Activated CD4-positive, alpha-beta T cell treated with anti-CD3 and anti-CD28 coated beads for 36 hours (primary cell): ENCODE measurements at regions of chr1 and their contacts with region 1.

Region 1: GRCh38 chr1:23367791-23368561 is 1.7 kb downstream of the ZNF436 start:
- DNase-seq: peak; percentile 99
- ATAC-seq: peak; percentile 95
- H3K4me3 Mint-ChIP-seq: peak overlapping the region; percentile 93
- H3K27ac Mint-ChIP-seq: peak overlapping the region; percentile 98
- H3K4me1 Mint-ChIP-seq: peaks cover 27% of the 10 kb centered on the region
- H3K27me3 Mint-ChIP-seq: no peaks in the 10 kb centered on the region

Region 2: DNA sequence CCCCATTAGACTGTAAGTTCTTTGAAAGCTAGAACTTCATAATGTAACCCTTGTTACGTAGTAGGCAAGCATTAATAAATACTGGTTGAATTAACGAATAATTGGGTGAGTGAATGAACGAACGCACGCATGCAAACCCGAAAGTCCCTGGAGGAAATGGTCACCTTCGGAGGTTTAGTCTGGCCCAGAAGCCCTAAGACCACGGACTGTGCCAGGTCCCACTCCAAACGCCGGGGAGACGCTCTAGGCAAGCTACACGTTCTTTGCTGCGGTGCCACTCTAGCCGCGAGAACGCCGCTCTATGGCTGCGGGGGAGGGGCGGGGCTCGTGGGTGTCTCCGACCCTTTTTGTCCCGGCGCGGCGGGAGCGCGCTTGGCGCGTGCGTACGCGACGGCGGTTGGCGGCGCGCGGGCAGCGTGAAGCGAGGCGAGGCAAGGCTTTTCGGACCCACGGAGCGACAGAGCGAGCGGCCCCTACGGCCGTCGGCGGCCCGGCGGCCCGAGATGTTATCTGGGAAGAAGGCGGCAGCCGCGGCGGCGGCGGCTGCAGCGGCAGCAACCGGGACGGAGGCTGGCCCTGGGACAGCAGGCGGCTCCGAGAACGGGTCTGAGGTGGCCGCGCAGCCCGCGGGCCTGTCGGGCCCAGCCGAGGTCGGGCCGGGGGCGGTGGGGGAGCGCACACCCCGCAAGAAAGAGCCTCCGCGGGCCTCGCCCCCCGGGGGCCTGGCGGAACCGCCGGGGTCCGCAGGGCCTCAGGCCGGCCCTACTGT is 348.7 kb before region 1 on chr1 and contains the start of gene KDM1A:
- CTCF ChIA-PET with region 1: no interaction called
- POLR2A ChIA-PET with region 1: no interaction called
- intact Hi-C with region 1: loop called in 1 of 2 experiments (anchors 1 kb)
- DNase-seq: peak; percentile 96
- ATAC-seq: peak; percentile 97
- H3K4me3 Mint-ChIP-seq: peak within 1 kb of the TSS; percentile 98
- H3K27ac Mint-ChIP-seq: peak within 1 kb of the TSS; percentile 90
- H3K4me1 Mint-ChIP-seq: peaks cover 43% of the 10 kb centered on the region
- H3K27me3 Mint-ChIP-seq: no peaks in the 10 kb centered on the region
- total RNA-seq, gene KDM1A: 66.5 to 73.2 TPM

Region 3: GRCh38 chr1:23384302-23385058 is 16.5 kb after region 1 on chr1:
- CTCF ChIA-PET with region 1: no interaction called
- POLR2A ChIA-PET with region 1: no interaction called
- intact Hi-C with region 1: no loop called
- DNase-seq: no peak
- ATAC-seq: no peak
- H3K4me3 Mint-ChIP-seq: no peak overlapping the region
- H3K27ac Mint-ChIP-seq: no peak overlapping the region
- H3K4me1 Mint-ChIP-seq: no peaks in the 10 kb centered on the region
- H3K27me3 Mint-ChIP-seq: no peaks in the 10 kb centered on the region

Region 4: DNA sequence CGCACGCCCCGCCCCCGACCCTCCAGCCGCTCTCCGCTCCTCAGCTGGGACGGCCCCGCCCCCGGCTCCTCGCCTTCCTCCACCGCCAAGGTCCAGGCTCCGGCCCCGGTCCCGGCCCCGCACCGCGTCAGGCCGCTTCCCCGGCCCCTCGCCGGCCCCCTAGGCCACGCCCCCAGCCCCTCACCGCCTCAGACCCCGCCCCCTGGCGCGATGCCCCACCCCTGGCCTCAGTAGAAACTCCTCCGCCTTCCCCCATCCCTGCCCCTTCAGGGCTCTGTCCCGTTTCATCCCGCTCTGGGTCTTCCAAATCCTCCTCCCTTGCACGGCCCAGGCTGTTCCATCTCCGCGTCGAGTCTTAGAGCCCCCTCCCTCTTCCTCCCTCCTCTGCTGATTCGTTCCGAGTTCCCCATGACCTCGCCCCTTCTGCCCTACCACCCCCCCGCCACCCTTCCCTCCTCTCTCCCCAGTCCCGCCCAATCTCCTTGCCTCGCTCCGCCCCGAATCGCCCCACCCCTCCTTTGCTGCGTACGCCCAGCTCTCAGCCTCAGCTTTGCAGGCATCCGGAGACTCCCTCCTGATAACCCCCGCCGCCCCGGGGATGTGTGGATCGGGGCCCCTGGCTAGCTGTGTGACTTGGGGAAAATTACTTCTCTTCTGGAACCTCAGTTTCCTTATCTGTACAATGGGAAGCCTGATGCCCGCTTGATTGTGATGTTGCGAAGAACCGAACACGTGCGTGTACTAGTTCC is 116.5 kb after region 1 on chr1:
- CTCF ChIA-PET with region 1: no interaction called
- POLR2A ChIA-PET with region 1: no interaction called
- intact Hi-C with region 1: loop called in 1 of 2 experiments (anchors 1 kb)
- DNase-seq: peak; percentile 95
- ATAC-seq: peak; percentile 94
- H3K4me3 Mint-ChIP-seq: peak overlapping the region; percentile 79
- H3K27ac Mint-ChIP-seq: peak overlapping the region; percentile 33
- H3K4me1 Mint-ChIP-seq: peaks cover 20% of the 10 kb centered on the region
- H3K27me3 Mint-ChIP-seq: peaks cover 18% of the 10 kb centered on the region

Region 5: GRCh38 chr1:23691499-23692307 is 323.7 kb after region 1 on chr1 and contains the start of gene RPL11:
- CTCF ChIA-PET with region 1: no interaction called
- POLR2A ChIA-PET with region 1: interaction called, 4 read pairs
- intact Hi-C with region 1: loop called (anchors 1 kb)
- DNase-seq: peak; percentile 93
- ATAC-seq: peak; percentile 98
- H3K4me3 Mint-ChIP-seq: peak within 1 kb of the TSS; percentile 97
- H3K27ac Mint-ChIP-seq: peak within 1 kb of the TSS; percentile 98
- H3K4me1 Mint-ChIP-seq: peaks cover 43% of the 10 kb centered on the region
- H3K27me3 Mint-ChIP-seq: peaks cover under 1% of the 10 kb centered on the region
- total RNA-seq, gene RPL11: 1,003 to 1,481 TPM

Region 6: DNA sequence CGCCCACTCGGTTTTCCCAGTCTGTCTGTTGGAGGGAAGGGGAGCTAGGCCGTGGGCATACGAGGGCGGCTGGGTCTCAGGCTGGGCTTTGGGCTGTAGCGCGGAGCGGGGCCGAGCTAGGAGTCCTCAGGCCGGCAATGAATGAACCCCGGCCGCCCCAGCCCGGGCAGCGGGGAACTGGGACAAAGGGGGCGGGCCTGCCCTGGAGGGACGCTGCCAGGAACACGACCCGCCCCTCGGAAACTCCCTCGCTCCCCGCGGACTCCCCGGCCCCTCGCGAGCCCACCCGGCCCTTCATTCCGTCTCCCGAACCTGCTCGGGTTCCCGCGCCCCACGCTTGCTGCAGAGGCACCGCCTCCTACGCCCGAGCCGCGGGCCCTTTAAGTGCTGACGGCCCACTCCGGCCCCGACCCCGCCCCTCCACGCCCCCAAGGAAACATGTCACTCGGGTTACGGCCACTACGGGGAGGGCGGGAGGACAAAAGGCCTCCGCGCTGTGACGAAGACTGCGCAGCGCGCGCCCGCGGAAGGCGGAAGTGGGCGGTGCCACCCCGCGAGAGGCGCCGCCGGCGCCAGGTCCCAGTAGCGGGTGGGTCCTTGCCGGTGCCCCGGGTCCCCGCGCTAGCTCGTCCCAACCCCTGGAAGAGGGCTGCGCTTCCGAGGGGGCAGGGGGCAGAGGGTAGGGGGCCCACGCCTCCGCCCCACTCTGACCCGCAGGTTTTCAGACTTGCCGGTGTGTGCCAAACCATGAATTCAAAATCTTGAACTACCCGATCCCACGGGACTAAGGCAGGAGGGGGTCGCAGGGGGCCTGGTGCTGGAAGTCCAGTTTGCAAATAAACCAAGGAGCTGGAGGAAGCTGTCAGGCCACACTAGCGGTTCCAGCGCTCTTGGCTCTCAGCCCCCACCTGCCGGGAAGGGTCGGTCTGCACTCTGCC is 432.7 kb after region 1 on chr1 and contains the start of gene GALE:
- CTCF ChIA-PET with region 1: interaction called, 3 read pairs
- POLR2A ChIA-PET with region 1: no interaction called
- intact Hi-C with region 1: loop called in 1 of 2 experiments (anchors 1 kb)
- DNase-seq: peak; percentile 99
- ATAC-seq: peak; percentile 84
- H3K4me3 Mint-ChIP-seq: peak within 1 kb of the TSS; percentile 86
- H3K27ac Mint-ChIP-seq: peak within 1 kb of the TSS; percentile 84
- H3K4me1 Mint-ChIP-seq: peaks cover 13% of the 10 kb centered on the region
- H3K27me3 Mint-ChIP-seq: no peaks in the 10 kb centered on the region
- total RNA-seq, gene GALE: 27.4 to 35.6 TPM

Region 7: DNA sequence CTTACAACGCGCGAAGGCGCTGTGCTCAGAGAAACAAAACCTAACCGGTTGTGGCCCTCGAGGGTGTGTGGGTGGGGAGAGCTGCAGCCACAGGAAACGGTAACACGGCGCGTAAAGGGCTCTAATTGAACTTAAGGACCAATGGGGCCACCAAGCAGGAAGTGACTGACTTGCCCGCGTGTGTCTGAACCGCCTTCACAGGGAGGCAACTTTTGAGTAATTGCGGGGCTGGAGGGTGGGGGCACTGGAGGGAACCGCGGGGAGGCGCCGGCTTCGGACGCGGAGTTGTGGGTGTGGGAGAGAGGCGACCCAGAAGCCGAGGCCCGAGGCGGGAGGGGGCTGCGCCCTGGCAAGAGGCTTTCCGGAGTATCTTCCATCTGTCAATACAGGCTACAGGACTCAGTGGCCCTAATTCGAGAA is 591.1 kb after region 1 on chr1:
- CTCF ChIA-PET with region 1: no interaction called
- POLR2A ChIA-PET with region 1: no interaction called
- intact Hi-C with region 1: loop called in 1 of 2 experiments (anchors 1 kb)
- DNase-seq: peak; percentile 97
- ATAC-seq: peak; percentile 82
- H3K4me3 Mint-ChIP-seq: peak overlapping the region; percentile 100
- H3K27ac Mint-ChIP-seq: peak overlapping the region; percentile 100
- H3K4me1 Mint-ChIP-seq: peaks cover 53% of the 10 kb centered on the region
- H3K27me3 Mint-ChIP-seq: no peaks in the 10 kb centered on the region